ENCODE measurements at regions of chr2 and their contacts with region 1.

Region 1: GRCh38 chr2:229586746-229587705 is 127.3 kb downstream of the DNER start:
- DNase-seq: peak; percentile 76 to 77
- ATAC-seq: peak; percentile 99 to 100
- H3K4me3 ChIP-seq: peak overlapping the region; percentile 32; the same call in 2 of the 3 replicates
- H3K27ac ChIP-seq: peak overlapping the region; percentile 72 to 78
- H3K4me1 ChIP-seq: peaks cover 11% of the 10 kb centered on the region; the same call in 2 of the 3 replicates
- CTCF ChIP-seq: peak; percentile 87
- EP300 ChIP-seq: no peak
- POLR2A ChIP-seq: no peak
- RAD21 ChIP-seq: peak; percentile 97

Region 2: DNA sequence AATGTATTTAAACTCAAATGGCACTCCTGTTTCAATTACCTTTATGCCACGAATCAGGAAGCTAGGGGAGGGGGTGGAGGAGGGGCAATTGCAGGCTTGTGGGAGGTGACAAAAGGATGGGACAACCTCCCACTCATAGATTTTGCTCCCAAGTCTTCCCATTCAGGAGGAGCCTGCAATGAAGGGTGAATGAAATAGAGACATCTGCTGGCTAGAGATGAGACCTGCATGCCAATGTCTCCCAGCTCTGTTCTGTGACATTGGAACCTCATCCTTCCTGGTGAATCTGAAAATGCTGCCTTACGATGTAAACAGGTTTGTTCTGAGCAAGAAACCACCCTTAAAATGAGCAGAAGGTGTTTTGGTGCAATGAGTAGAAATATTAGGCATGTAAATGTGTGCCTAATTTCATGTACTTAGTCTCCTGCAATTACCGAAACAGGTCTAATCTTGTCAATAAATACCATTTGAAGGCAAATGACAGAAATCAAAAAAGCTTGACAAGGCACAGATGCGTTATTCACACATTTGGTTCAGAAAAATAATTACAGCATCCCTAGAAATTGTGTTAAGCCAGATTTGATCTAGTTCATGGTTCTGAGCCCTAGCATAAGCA is 313.2 kb before region 1 on chr2:
- CTCF ChIA-PET with region 1: interaction called, 11 read pairs
- POLR2A ChIA-PET with region 1: no interaction called
- DNase-seq: peak; percentile 69 to 85
- ATAC-seq: peak; percentile 81 to 94
- H3K4me3 ChIP-seq: peak overlapping the region; percentile 27; the same call in 2 of the 3 replicates
- H3K27ac ChIP-seq: peak overlapping the region in 1 of 2 experiments; percentile 40; a peak in 2 of 6 replicates
- H3K4me1 ChIP-seq: peaks cover 4% of the 10 kb centered on the region; the same call in 1 of the 3 replicates
- CTCF ChIP-seq: peak; percentile 72
- EP300 ChIP-seq: no peak
- POLR2A ChIP-seq: no peak
- RAD21 ChIP-seq: peak; percentile 64 to 66

Region 3: DNA sequence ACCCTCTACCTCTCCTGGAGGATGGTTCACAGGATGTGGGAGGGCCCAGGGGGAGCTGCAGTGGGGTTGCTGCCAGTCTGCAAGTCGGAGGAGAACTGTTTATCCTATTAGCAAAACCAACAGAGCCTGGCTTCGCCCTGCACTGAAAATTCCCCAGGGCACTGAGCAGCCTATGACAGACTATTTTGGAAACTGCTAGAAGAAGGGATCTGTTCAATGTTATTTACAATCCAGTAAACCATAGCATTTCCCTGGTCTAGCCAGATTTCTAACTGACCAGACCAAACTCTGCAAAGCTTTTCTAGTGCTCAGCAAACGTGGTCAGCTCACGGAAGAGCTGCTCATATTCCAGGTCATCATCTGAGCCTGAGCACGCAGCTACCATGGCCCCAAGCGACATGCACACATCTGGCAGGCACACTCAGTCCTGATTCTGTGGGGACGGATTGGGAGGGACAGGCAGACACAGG is 251.1 kb before region 1 on chr2:
- CTCF ChIA-PET with region 1: no interaction called
- POLR2A ChIA-PET with region 1: no interaction called
- DNase-seq: no peak
- ATAC-seq: no peak
- H3K4me3 ChIP-seq: no peak overlapping the region
- H3K27ac ChIP-seq: no peak overlapping the region
- H3K4me1 ChIP-seq: no peaks in the 10 kb centered on the region
- CTCF ChIP-seq: no peak
- EP300 ChIP-seq: no peak
- POLR2A ChIP-seq: no peak
- RAD21 ChIP-seq: no peak

Region 4: DNA sequence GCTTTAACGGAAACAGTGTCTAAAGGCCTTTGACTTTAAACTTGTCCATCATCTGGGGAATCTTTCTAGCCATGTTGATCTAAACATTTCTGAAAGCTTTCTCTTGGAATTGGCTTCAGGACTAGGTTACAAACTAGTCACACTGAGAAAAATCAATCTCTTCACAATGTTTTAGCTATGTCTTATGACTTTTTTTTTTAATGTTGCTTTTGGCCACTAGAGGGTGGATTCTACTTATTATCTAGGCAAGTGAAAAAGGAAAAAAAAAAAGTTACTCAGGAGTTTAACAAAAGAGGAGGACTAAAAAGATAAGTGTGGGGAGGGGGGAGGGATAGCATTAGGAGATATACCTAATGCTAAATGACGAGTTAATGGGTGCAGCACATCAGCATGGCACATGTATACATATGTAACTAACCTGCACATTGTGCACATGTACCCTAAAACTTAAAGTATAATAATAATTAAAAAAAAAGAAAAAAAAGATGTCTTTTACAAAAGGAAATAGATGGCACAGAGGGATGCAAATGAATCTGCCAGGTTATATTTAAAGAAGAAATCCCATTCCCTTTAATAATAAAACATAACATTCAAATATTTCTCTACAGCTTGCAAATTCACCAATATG is 155.6 kb before region 1 on chr2:
- CTCF ChIA-PET with region 1: interaction called, 63 read pairs
- POLR2A ChIA-PET with region 1: interaction called, 7 read pairs
- DNase-seq: peak in 1 of 2 experiments; percentile 69
- ATAC-seq: peak; percentile 54 to 77; a peak in 4 of 6 replicates
- H3K4me3 ChIP-seq: no peak overlapping the region
- H3K27ac ChIP-seq: peak overlapping the region in 1 of 2 experiments; percentile 49; a peak in 1 of 6 replicates
- H3K4me1 ChIP-seq: peaks cover 14% of the 10 kb centered on the region; the same call in 1 of the 3 replicates
- CTCF ChIP-seq: peak; percentile 55
- EP300 ChIP-seq: no peak
- POLR2A ChIP-seq: no peak
- RAD21 ChIP-seq: peak; percentile 69 to 73

Region 5: GRCh38 chr2:229566370-229566769 is 20.7 kb before region 1 on chr2:
- CTCF ChIA-PET with region 1: interaction called, 10 read pairs
- POLR2A ChIA-PET with region 1: no interaction called
- DNase-seq: no peak
- ATAC-seq: no peak
- H3K4me3 ChIP-seq: no peak overlapping the region
- H3K27ac ChIP-seq: no peak overlapping the region
- H3K4me1 ChIP-seq: no peaks in the 10 kb centered on the region
- CTCF ChIP-seq: no peak
- EP300 ChIP-seq: no peak
- POLR2A ChIP-seq: no peak
- RAD21 ChIP-seq: no peak

Region 6: GRCh38 chr2:229748950-229749349 is 161.9 kb after region 1 on chr2:
- CTCF ChIA-PET with region 1: no interaction called
- POLR2A ChIA-PET with region 1: no interaction called
- DNase-seq: no peak
- ATAC-seq: peak in 1 of 2 experiments; percentile 60; a peak in 2 of 6 replicates
- H3K4me3 ChIP-seq: no peak overlapping the region
- H3K27ac ChIP-seq: no peak overlapping the region
- H3K4me1 ChIP-seq: no peaks in the 10 kb centered on the region
- CTCF ChIP-seq: no peak
- EP300 ChIP-seq: no peak
- POLR2A ChIP-seq: no peak
- RAD21 ChIP-seq: no peak

Region 7: GRCh38 chr2:230268606-230269243 is 681.7 kb after region 1 on chr2:
- CTCF ChIA-PET with region 1: no interaction called
- POLR2A ChIA-PET with region 1: no interaction called
- DNase-seq: no peak
- ATAC-seq: no peak
- H3K4me3 ChIP-seq: no peak overlapping the region
- H3K27ac ChIP-seq: no peak overlapping the region
- H3K4me1 ChIP-seq: no peaks in the 10 kb centered on the region
- CTCF ChIP-seq: no peak
- EP300 ChIP-seq: no peak
- POLR2A ChIP-seq: no peak
- RAD21 ChIP-seq: no peak

Measured in A549 (cell line).